CD4-positive, alpha-beta memory T cell (primary cell): ENCODE measurements at regions of chr7 and their contacts with region 1.

Region 1: DNA sequence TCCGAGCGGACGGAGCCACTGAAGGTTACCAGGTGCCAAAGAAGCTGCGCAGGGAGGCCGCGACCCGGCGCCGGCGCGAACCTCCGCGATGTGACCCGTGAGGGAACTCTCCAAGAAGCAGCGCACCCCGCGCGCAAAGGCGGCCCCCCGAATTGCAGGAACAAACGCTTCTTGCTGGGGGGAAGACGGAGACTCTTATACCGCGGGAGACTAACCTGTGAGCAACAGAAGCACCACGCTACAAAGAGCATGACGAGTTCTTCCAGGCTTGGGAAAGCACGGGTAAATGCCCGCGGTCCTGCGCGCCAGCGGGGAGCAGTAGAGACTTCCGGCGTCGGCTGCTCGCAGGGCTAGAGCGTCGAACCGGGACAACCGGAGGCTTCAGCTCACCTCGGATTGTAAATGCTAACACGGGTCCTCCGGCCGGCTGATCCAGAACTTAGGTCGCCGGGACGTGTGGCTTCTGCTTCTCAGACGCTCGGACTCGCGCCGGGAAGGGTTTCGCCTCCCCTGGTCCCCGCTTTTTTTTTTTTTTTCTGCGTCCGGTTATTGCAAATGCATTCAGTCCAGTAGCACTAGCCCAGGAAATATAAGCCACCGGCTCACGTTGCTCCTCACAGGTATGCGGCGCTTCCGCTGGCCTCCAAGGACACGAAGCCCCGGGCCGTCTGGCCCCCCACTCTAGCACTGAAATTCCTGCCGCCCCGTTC is at the start of gene COA1:
- DNase-seq: peak; percentile 82 to 84 (median 83)
- H3K4me3 ChIP-seq: peak within 1 kb of the TSS; percentile 97 to 99
- H3K4me3 Mint-ChIP-seq: peak within 1 kb of the TSS; percentile 93 to 95 (median 94)
- H3K27ac ChIP-seq: peak within 1 kb of the TSS; percentile 67
- H3K27ac Mint-ChIP-seq: peak within 1 kb of the TSS; percentile 84 to 95 (median 91)
- H3K4me1 ChIP-seq: peaks cover 34% of the 10 kb centered on the region
- H3K4me1 Mint-ChIP-seq: peaks cover 27 to 43% (median 35%) of the 10 kb centered on the region in 4 donors
- H3K27me3 ChIP-seq: no peaks in the 10 kb centered on the region
- H3K27me3 Mint-ChIP-seq: no peaks in the 10 kb centered on the region
- total RNA-seq, gene COA1: 52.0 to 53.2 TPM

Region 2: DNA sequence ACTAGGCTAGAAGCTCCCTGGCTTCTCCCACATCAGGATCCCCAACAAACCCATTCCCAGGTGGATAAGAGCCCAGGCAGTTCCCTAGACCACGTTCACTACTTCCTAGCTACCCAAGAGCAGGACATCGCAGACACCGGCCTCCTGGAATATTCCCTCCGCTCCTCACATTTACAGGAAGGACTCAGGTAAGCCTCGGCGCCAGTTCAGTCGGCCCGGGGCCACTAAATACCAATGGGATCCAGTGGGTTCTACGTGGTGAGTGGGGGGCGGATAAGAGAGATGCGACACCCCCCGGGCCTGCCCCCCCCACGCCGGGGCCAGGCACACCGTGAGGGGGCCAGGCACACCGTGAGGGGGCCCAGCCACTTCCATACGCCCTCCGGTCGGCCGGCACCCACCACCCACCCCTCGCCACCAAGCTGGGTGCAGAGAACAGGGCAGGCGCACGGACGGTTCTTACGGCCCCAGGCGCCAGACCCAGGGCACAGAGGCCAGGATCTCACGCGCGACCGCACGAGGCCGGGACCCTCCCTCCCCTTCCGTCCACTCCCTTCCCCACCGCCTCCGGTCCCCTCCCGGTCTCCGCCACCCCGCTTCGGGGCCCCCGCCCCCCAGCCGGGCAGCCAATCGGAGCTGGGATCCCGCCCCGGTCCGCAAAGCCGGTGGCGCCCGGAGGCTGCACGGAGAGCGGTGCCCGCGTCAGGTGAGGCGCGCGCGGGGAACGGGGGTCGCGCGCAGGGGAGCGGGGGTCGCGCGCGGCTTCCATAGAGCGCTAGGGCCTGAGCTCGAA is 28.9 kb after region 1 on chr7 and contains the start of gene BLVRA:
- CTCF ChIA-PET with region 1: interaction called, 4 read pairs
- POLR2A ChIA-PET with region 1: interaction called, 22 read pairs
- intact Hi-C with region 1: loop called (anchors 1 kb)
- DNase-seq: peak; percentile 59 to 75 (median 69)
- H3K4me3 ChIP-seq: peak within 1 kb of the TSS; percentile 57 to 79
- H3K4me3 Mint-ChIP-seq: peak within 1 kb of the TSS; percentile 86 to 95 (median 91)
- H3K27ac ChIP-seq: peak within 1 kb of the TSS; percentile 77
- H3K27ac Mint-ChIP-seq: peak within 1 kb of the TSS; percentile 79 to 95 (median 89)
- H3K4me1 ChIP-seq: peaks cover 36% of the 10 kb centered on the region
- H3K4me1 Mint-ChIP-seq: peaks cover 22 to 42% (median 34%) of the 10 kb centered on the region in 4 donors
- H3K27me3 ChIP-seq: no peaks in the 10 kb centered on the region
- H3K27me3 Mint-ChIP-seq: no peaks in the 10 kb centered on the region
- total RNA-seq, gene BLVRA: 18.1 to 19.3 TPM

Region 3: GRCh38 chr7:43779032-43779812 is 49.9 kb after region 1 on chr7:
- CTCF ChIA-PET with region 1: interaction called, 3 read pairs
- POLR2A ChIA-PET with region 1: no interaction called
- intact Hi-C with region 1: loop called (anchors 5 kb)
- DNase-seq: no peak
- H3K4me3 ChIP-seq: no peak overlapping the region
- H3K4me3 Mint-ChIP-seq: peak overlapping the region; percentile 22 to 62 (median 57)
- H3K27ac ChIP-seq: no peak overlapping the region
- H3K27ac Mint-ChIP-seq: peak overlapping the region in 3 of 7 donors; percentile 18 to 57 (median 46)
- H3K4me1 ChIP-seq: peaks cover 21% of the 10 kb centered on the region
- H3K4me1 Mint-ChIP-seq: peaks cover 14 to 36% (median 32%) of the 10 kb centered on the region in 4 donors
- H3K27me3 ChIP-seq: no peaks in the 10 kb centered on the region
- H3K27me3 Mint-ChIP-seq: no peaks in the 10 kb centered on the region